ENCODE measurements at regions of chr2 and their contacts with region 1.

Region 1: DNA sequence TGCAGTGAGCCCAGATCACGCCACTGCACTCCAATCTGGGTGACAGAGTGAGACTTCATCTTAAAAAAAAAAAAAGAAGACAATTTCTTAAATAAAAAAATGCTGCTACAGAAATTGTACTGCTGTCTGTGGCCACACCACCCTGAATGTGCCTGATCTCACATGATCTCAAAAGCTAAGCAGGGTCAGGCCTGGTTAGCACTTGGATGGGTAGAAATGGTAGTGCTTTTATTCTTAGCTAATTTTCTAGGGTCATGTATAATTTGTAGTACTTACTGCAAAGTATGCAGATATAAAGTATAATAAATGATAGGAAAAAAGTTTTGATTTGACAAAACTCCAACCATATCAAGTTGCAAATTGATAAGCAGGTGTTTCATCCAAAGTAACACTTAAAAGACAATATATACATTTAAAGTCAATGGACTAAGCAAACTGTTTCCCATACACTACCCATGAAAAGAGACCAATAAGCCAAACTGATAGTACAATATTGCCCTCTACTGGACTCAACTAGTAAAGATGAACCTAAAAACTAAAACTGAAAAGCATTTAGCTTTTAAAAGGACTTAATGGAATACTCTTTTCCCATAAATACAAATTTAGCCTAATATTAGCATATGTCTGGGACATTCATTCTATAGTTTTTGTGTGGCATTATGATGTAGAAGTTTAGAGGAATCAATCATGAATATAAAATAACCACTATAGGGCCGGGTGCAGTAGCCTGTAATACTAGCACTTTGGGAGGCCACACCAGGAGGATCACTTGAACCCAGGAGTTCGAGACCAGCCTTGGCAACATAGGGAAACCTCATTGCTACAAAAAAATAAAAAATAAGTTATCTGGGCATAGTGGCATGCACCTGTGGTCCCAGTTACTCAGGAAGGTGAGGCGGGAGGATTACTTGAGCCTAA is 18.6 kb upstream of the PEX13 start:
- DNase-seq: no peak

Region 2: DNA sequence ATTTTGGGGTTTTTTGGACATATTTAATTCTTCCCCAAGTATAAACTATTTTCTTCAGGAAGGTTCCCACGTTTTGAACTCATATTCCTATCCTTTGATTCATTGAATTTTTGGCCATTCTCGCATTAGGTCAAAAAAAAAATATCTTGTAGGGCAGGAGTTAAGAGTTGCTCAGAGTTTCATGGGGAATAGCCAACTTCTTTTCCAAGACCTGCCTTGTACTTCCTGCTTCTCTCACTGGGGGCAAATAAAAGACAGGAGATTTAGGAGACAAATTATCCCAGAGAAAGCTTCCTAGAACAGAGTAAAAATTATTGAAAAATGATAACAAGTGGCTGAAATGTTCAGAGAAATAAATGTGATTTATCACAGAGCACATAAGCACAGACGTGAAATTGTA is 390.2 kb before region 1 on chr2:
- intact Hi-C with region 1: no loop called
- DNase-seq: no peak

Region 3: GRCh38 chr2:60707750-60708371 is 291.0 kb before region 1 on chr2:
- intact Hi-C with region 1: loop called (anchors 5 kb)
- DNase-seq: peak in 3 of 42 donors; percentile 9 to 40 (median 35)

Region 4: DNA sequence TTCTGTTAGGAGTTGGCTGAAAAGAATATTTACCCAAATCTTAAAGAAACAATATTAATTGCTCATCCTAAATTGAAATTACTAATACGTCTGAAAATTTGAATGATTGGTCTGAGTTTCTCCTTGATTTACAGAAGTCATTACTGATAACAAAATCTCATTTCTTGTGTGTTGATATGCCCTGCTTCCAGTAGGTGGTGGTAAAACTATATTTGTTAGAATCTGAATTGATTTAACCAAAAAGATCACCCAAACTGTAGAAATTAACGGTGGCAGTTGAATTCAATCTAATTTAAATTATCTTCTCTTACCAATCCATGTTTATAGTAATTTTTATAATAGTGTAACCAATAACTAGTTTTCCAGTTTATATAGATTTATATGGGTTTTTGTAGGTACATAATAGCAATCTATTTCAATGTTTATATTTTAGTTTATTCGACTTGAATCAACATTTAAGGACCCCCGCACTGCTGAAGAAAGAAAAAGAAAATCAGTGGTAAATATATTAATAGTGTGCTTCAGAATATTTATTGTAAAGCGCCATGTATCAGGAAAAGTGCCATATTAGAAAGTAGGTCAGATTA is 204.5 kb before region 1 on chr2:
- intact Hi-C with region 1: loop called (anchors 10 kb)
- DNase-seq: no peak

Region 5: GRCh38 chr2:61165946-61166345 is 167.1 kb after region 1 on chr2:
- intact Hi-C with region 1: no loop called
- DNase-seq: no peak

Measured in head of caudate nucleus (tissue), 42 donors.